Activated CD8-positive, alpha-beta T cell treated with anti-CD3 and anti-CD28 coated beads for 36 hours (primary cell): ENCODE measurements at regions of chr6 and their contacts with region 1.

Region 1: DNA sequence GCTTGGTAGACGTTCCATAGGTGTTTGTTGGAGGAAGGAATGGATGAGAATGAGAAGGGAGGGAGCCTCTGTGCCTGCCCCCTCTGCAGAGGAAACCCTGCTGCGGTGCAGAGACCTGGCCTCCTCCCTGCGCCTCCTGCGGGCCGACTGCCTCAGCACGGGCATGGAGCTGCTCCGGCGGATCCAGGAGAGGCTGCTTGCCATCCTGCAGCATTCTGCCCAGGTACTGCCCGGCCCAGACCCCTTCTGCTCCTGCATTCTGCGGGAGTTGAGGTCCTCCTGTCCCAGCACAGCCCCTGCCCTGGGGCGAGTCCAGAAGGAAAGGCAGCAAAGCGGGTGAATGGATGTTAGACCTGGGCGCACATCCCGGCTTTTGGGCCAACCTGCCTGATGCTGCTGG is 6.1 kb downstream of the DNPH1 start:
- DNase-seq: no peak
- ATAC-seq: no peak
- H3K4me3 Mint-ChIP-seq: no peak overlapping the region
- H3K27ac Mint-ChIP-seq: peak overlapping the region; percentile 89
- H3K4me1 Mint-ChIP-seq: peaks cover 41% of the 10 kb centered on the region
- H3K27me3 Mint-ChIP-seq: no peaks in the 10 kb centered on the region
- CTCF ChIP-seq: no peak

Region 2: GRCh38 chr6:43174263-43175112 is 48.7 kb before region 1 on chr6:
- CTCF ChIA-PET with region 1: no interaction called
- POLR2A ChIA-PET with region 1: interaction called, 13 read pairs
- intact Hi-C with region 1: loop called (anchors 5 kb)
- DNase-seq: peak; percentile 98
- ATAC-seq: peak; percentile 78
- H3K4me3 Mint-ChIP-seq: peak overlapping the region; percentile 93
- H3K27ac Mint-ChIP-seq: peak overlapping the region; percentile 83
- H3K4me1 Mint-ChIP-seq: peaks cover 38% of the 10 kb centered on the region
- H3K27me3 Mint-ChIP-seq: no peaks in the 10 kb centered on the region
- CTCF ChIP-seq: no peak

Region 3: DNA sequence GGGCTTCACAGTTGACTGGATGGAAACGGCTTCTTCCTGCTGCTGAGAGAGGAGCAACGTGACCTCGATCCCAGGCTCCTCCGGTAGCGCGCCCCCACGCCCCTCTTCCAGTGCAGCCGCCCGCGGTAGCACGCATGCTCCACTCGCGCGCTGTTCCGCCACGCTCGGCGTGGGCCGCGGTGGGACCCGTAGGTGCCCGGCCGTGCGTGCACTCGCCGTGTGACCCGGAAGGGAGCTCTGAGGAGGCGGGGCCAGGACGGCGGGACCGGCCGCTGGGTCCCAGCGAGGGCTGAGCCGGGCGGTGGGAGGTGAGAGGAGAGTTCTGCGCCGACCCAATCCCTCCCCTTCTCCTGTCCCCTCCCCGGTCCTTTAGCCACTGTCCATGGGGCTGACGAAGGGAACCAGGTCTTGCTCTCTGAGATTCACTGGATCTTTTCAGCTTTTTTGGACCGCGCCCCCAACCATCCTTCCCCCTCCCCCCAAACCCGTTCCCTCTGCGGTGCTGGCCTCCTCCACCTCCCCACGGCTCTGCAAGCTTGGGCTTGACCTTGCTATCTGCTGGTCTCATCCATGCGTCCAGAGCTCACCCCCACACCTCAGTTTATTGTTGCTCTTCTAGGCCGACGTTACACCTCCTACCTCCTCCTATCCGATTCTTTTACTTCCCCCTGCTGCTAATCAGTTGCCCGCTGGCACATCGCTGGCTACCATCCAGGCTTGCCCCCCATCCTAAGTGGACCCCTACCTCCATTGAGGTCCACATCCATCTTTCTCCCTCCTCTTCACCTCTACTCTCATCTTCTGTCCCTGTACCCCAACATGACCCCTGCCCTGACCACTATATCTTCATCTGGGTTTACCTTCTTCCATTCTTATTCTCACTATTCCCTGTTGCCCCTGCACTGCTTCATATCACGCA is 41.0 kb before region 1 on chr6 and contains the start of gene CUL9:
- CTCF ChIA-PET with region 1: no interaction called
- POLR2A ChIA-PET with region 1: interaction called, 12 read pairs
- intact Hi-C with region 1: no loop called
- DNase-seq: peak; percentile 86
- ATAC-seq: peak; percentile 97
- H3K4me3 Mint-ChIP-seq: peak within 1 kb of the TSS; percentile 90
- H3K27ac Mint-ChIP-seq: peak within 1 kb of the TSS; percentile 87
- H3K4me1 Mint-ChIP-seq: peaks cover 44% of the 10 kb centered on the region
- H3K27me3 Mint-ChIP-seq: no peaks in the 10 kb centered on the region
- CTCF ChIP-seq: no peak
- total RNA-seq, gene CUL9: 38.8 to 43.1 TPM

Region 4: DNA sequence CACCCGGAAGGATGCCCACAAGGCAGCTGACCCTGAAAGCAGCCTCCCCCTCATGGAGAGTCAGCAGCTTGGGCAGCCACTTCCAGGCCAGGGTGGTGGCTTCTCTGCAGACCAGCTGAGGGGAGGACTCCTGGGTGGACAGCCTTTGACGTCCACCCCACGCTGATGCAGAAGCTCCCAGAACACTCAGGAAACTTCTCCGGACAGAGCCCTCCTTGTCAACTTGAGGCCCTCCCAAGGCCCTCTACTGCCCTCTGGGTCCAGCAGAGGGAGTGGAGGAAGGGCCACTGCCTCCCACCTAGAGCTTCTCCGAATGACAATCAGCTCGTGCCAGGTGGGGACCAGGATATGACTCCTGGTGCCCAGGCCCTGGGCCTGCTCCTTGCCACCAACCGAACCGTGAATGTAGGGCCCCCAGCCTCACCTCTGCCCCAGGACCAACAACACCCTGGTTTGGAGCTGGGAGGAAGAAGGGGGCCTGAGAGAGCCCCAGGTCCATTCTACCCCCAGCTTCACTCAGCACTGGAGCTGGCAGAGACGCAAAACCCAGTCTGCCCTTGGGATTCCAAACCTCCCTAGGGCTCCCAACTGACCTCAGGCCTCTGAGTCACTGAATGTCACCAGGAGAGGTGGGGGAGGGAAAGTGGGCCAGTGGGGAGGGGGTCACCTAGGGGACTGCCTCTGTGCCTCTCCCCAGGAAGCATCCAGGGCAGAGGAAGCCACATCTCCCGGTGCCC is 64.0 kb after region 1 on chr6:
- CTCF ChIA-PET with region 1: no interaction called
- POLR2A ChIA-PET with region 1: no interaction called
- intact Hi-C with region 1: no loop called
- DNase-seq: no peak
- ATAC-seq: no peak
- H3K4me3 Mint-ChIP-seq: no peak overlapping the region
- H3K27ac Mint-ChIP-seq: no peak overlapping the region
- H3K4me1 Mint-ChIP-seq: no peaks in the 10 kb centered on the region
- H3K27me3 Mint-ChIP-seq: peaks cover 21% of the 10 kb centered on the region
- CTCF ChIP-seq: no peak